Posterior vena cava (tissue), 2 donors: ENCODE measurements at regions of chr17 and their contacts with region 1.

Region 1: GRCh38 chr17:76720976-76721375 is 5.4 kb downstream of the JMJD6 start:
- DNase-seq: no peak

Region 2: DNA sequence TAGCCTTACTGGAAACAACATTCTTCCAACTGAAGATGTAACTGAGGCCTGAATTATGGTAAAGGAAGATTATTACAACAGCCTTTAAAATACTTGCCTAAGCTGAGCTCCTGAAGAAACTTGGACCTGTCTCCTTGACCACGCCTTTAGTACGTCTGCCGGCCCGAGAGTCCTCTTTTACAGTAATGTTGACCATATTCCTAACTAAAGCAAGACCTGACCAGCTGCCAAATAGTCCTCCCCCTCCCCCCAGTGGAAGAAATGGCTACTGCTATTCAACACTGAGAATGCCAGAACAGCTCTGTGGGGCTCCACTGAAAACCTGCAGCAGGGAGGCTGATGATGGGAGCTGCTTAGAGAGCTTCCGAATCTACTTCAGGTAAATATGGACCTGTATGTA is 567.3 kb before region 1 on chr17:
- intact Hi-C with region 1: loop called in 1 of 2 experiments (anchors 5 kb)
- DNase-seq: peak; percentile 73

Region 3: GRCh38 chr17:78092794-78093324 is 1371.9 kb after region 1 on chr17:
- intact Hi-C with region 1: no loop called
- DNase-seq: no peak